Activated B cell treated with CpG ODN at 0.5 μM for 24 hours (primary cell): ENCODE measurements at regions of chr3 and their contacts with region 1.

Region 1: DNA sequence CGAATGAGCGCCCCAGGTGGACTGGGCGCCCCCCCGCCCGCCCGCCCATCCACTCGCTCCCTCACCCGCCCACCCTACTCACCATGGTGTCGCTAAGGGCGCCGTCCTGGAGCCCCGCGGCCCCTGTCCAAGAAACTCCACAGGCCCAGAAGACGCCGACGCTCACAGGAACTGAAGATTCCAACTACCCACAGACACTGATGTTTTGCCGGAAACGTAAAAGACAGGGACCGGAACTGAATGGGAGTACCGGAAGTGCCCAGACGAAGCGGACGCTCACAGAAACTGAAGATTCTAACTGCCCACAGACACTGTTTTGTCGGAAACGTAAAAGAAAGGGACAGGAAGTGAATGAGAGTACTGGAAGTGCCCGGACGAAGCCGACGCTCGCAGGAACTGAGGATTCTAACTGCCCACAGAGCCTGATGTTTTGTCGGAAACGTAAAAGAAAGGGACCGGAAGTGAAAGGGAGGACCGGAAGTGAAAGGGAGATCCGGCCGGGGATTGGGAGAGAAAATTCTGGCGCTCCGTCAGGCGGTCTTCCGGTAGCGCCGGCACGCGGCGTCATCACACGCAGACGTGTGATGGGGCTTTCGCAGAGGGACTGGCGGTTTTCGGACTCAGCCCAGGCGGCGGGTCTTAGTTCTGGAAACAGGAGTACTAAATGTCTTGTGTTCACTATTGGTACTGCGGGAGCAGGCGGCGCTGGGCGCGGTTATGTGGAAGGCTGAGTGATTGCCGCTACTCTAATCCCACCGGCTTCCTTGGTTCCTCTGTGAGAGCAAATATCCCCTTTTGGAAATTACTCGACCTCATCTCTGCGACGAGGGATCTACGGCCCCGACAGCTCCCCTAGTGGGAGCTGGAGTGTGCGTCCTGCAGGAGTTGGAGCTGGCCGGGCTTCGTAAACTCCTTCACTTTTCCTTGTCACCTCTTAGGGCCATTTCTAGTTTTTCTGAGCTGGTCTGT is at the start of gene ISY1:
- DNase-seq: peak; percentile 80
- ATAC-seq: peak; percentile 84
- H3K4me3 Mint-ChIP-seq: peak within 1 kb of the TSS; percentile 98
- H3K27ac Mint-ChIP-seq: peak within 1 kb of the TSS; percentile 100
- H3K4me1 Mint-ChIP-seq: peaks cover 39% of the 10 kb centered on the region
- H3K27me3 Mint-ChIP-seq: no peaks in the 10 kb centered on the region
- CTCF ChIP-seq: no peak
- total RNA-seq, gene ISY1: 47.7 and 52.9 TPM in 2 replicates

Region 2: DNA sequence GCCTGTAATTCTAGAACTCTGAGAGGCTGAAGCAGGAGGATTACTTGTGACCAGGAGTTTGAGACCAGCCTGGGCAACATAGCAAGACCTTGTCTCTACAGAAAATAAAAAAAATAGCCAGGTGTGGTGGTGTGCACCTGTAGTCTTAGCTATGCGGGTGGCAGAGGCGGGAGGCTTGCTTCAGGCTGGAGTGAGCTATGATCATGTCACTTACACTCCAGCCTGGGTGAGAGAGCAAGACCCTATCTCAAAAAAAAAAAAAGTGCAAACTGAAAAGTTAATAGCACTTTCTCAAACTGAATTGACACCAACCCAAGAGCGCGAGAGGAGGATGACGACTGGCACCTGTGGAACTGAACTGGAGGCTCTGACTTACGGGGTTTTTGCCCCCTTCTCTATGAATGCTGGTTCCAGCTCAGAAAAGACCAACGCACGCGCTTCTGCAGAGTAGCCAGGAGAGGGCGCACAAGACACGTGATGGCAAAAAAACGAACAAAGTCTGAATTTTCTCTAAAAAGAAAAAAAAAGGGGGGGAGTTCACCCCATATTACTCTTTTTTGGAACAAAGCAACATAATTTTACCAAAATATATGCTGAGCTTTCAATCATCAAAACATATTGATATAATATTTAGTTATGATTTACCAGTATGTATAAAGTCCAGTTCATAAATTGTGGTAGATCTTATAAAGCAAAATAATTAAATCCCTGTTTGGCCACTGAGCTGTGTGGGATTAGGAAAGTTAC is 191.0 kb before region 1 on chr3:
- CTCF ChIA-PET with region 1: interaction called, 7 read pairs
- POLR2A ChIA-PET with region 1: no interaction called
- intact Hi-C with region 1: loop called (anchors 1 kb)
- DNase-seq: peak; percentile 28
- ATAC-seq: peak; percentile 50
- H3K4me3 Mint-ChIP-seq: no peak overlapping the region
- H3K27ac Mint-ChIP-seq: no peak overlapping the region
- H3K4me1 Mint-ChIP-seq: peaks cover 15% of the 10 kb centered on the region
- H3K27me3 Mint-ChIP-seq: no peaks in the 10 kb centered on the region
- CTCF ChIP-seq: peak; percentile 70

Region 3: GRCh38 chr3:129026728-129027543 is 134.2 kb before region 1 on chr3:
- CTCF ChIA-PET with region 1: no interaction called
- POLR2A ChIA-PET with region 1: interaction called, 4 read pairs
- intact Hi-C with region 1: loop called (anchors 1 kb)
- DNase-seq: peak; percentile 83
- ATAC-seq: peak; percentile 97
- H3K4me3 Mint-ChIP-seq: peak overlapping the region; percentile 85
- H3K27ac Mint-ChIP-seq: peak overlapping the region; percentile 94
- H3K4me1 Mint-ChIP-seq: peaks cover 12% of the 10 kb centered on the region
- H3K27me3 Mint-ChIP-seq: no peaks in the 10 kb centered on the region
- CTCF ChIP-seq: no peak

Region 4: GRCh38 chr3:129144786-129145185 is 16.4 kb before region 1 on chr3:
- CTCF ChIA-PET with region 1: no interaction called
- POLR2A ChIA-PET with region 1: interaction called, 14 read pairs
- intact Hi-C with region 1: no loop called
- DNase-seq: no peak
- ATAC-seq: no peak
- H3K4me3 Mint-ChIP-seq: no peak overlapping the region
- H3K27ac Mint-ChIP-seq: no peak overlapping the region
- H3K4me1 Mint-ChIP-seq: no peaks in the 10 kb centered on the region
- H3K27me3 Mint-ChIP-seq: no peaks in the 10 kb centered on the region
- CTCF ChIP-seq: no peak

Region 5: DNA sequence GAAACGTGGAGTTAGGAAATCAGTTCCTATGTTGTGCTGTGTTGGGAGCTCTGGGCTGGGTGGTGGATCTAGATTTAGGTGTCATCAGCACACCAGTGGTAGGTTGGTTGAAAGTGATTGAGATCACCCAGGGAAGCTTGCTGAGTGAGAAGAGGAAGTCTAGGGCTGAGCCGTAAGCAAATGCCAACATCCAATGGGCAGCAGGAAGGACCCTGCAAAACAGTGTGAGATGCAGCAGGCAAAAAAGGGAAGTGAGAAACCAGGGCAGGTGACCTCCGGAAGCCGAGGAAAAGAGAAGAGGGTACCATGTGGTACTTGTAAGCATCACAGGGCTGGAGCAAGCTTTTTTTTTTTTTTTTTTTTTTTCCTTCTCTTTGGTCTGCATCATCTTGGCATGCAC is 72.4 kb after region 1 on chr3:
- CTCF ChIA-PET with region 1: interaction called, 4 read pairs
- POLR2A ChIA-PET with region 1: interaction called, 7 read pairs
- intact Hi-C with region 1: loop called (anchors 1 kb)
- DNase-seq: peak; percentile 53
- ATAC-seq: peak; percentile 93
- H3K4me3 Mint-ChIP-seq: peak overlapping the region; percentile 50
- H3K27ac Mint-ChIP-seq: peak overlapping the region; percentile 88
- H3K4me1 Mint-ChIP-seq: peaks cover 52% of the 10 kb centered on the region
- H3K27me3 Mint-ChIP-seq: no peaks in the 10 kb centered on the region
- CTCF ChIP-seq: no peak

Region 6: DNA sequence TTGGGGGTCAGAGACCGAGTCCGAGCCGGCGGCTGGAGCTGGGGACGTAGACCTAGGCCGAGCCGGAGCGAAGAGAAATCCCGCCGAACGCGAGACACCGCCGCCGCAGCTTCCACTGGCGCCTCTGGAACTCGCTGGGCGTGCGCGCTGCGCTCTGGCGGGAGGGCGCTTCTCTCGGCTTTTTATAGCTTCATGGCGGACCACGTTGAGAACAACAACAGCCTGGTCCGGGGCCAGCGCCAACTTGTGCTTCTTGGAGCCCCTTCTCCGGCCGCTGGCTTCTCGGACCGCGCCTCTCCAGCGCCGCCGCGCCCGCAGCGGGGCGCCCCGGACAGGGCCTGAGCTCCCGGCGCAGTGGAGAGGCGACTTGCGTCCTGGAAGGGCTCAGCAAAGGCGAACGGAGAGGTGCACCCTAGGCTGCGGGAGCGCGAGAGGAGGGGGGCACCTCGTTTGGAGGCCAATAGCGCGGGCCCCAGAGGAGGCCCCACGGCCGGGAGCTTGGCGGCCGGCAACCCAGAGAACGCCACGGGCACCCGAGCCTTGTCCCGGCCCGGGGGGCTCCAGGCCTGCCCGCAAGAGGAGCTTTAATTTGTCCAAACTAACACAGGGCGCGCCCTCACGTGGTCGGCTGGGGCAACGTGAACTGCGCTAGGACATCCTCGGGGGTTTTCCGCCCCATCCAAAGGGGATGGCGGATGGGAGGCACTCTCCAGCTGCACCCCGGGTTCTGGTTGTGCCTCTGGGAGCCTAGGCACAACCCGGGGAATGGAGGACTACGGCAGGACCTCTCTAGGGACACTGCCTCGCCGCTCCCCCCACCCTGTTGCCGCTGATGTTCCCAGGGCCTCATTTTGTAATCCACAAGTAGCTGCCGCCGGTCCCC is 155.2 kb after region 1 on chr3:
- CTCF ChIA-PET with region 1: interaction called, 8 read pairs
- POLR2A ChIA-PET with region 1: no interaction called
- intact Hi-C with region 1: loop called (anchors 1 kb)
- DNase-seq: peak; percentile 69
- ATAC-seq: peak; percentile 38
- H3K4me3 Mint-ChIP-seq: peak overlapping the region; percentile 76
- H3K27ac Mint-ChIP-seq: no peak overlapping the region
- H3K4me1 Mint-ChIP-seq: peaks cover 24% of the 10 kb centered on the region
- H3K27me3 Mint-ChIP-seq: peaks cover 17% of the 10 kb centered on the region
- CTCF ChIP-seq: no peak